Activated B cell treated with CpG ODN at 0.5 μM for 24 hours (primary cell): ENCODE measurements at regions of chr9 and their contacts with region 1.

Region 1: DNA sequence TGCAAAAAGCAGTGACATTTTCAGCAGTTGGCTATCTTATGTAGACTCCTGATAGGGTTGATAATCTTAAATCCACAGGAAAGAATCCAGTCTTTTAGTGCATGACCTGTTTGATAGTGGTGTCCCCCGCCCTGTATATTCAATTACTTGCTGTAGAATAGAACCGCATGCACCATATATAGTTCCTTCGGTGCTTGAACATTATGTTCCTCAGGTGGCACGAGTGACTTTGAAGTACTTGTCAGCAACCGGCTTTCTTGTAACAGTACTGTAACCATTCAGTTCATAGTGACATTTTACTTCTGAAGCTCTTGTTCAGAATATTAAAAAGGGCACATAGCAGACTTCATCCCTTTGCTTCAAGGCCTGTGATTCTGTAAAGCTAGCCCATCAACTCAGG is 163.2 kb upstream of the KLF9 start:
- DNase-seq: no peak
- ATAC-seq: no peak
- H3K4me3 Mint-ChIP-seq: no peak overlapping the region
- H3K27ac Mint-ChIP-seq: no peak overlapping the region
- H3K4me1 Mint-ChIP-seq: peaks cover 6% of the 10 kb centered on the region
- H3K27me3 Mint-ChIP-seq: no peaks in the 10 kb centered on the region
- CTCF ChIP-seq: no peak

Region 2: DNA sequence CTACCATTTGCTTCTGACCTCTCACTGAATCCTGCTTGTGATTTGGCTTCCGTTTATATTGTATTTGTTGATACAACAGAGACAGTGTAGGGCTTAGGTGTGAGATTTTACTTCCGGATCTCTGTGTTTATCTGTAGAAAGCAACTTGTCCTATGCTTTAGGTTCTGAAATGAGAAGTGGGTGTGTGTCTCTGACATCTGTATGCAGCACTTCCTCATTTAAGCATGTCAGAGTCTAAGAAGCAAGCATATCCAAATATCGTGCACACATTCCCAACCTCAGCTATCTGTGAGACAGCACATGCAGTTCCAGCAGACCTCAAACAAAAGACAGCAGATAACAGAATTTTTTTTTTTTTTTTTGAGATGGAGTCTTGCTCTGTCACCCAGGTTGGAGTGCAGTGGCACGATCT is 179.5 kb before region 1 on chr9:
- CTCF ChIA-PET with region 1: no interaction called
- POLR2A ChIA-PET with region 1: interaction called, 11 read pairs
- intact Hi-C with region 1: no loop called
- DNase-seq: no peak
- ATAC-seq: peak; percentile 97
- H3K4me3 Mint-ChIP-seq: peak overlapping the region; percentile 51
- H3K27ac Mint-ChIP-seq: peak overlapping the region; percentile 86
- H3K4me1 Mint-ChIP-seq: peaks cover 66% of the 10 kb centered on the region
- H3K27me3 Mint-ChIP-seq: no peaks in the 10 kb centered on the region
- CTCF ChIP-seq: no peak

Region 3: DNA sequence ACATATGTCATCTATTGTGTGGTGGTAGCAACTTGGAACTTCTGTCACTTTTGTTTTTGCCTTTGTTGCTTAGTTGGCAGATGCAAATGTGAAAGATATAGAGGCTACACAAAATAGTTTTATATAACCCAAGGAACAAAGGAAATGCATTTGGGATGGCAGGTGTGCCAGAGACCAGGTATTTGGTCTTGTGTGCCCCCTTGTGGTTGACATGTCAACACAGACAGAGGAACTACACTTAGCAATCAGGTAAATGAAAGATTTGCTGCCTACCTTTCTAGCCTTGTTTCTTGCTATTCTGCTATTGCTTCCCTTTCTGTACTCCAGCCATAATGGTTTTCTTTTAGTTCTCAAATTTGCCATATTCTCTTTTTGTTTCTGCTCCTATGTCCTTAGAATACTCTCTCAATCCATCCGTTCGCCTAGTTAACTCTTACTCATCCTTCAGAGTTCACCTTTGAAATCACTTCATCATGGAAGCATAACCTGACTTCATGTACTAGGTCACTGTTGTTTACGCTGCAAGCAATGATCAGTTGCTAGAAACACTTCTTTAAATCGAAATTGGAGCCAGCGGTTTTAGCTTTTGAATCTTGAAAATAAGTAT is 424.2 kb after region 1 on chr9:
- CTCF ChIA-PET with region 1: no interaction called
- POLR2A ChIA-PET with region 1: no interaction called
- intact Hi-C with region 1: no loop called
- DNase-seq: no peak
- ATAC-seq: no peak
- H3K4me3 Mint-ChIP-seq: no peak overlapping the region
- H3K27ac Mint-ChIP-seq: no peak overlapping the region
- H3K4me1 Mint-ChIP-seq: no peaks in the 10 kb centered on the region
- H3K27me3 Mint-ChIP-seq: no peaks in the 10 kb centered on the region
- CTCF ChIP-seq: no peak